ENCODE measurements at regions of chr9 and their contacts with region 1.

Region 1: DNA sequence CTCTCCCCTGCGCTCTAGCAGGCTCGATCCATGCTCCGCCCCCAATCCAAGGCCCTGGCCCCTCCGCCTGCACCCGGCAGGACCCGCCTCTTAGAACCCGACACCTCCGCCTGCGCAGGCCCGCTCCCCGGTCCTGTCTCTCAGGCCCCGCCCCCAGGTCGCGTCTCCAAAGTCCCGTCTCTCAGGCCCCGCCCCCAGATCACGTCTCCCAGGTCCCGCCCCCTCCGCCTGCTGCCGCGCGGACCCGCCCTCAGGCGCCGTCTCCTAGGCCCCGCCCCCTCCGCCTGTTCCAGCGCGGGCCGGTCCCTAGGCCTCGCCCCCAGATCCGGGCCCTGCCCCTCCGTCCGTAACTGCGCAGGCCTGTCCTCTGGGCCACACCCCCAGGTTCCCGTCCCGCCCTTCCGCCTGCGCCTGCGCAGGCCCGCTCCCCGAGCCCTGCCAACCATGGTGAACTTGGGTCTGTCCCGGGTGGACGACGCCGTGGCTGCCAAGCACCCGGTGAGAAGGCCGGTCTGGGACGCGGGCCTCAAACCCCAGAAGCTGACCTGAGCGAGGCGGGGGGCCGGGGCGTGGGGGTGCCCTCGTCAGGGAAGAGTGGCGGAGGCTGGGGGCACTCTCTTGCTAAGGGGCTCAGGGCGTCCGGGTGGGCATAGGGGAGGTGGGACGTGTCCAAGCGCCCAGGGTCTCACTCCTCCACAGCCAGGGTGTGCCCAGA is at the start of gene TMEM141:
- DNase-seq: peak; percentile 100
- H3K4me3 Mint-ChIP-seq: peak within 1 kb of the TSS; percentile 81
- H3K27ac Mint-ChIP-seq: peak within 1 kb of the TSS; percentile 79
- H3K4me1 Mint-ChIP-seq: peaks cover 21% of the 10 kb centered on the region
- H3K27me3 Mint-ChIP-seq: peaks cover 1% of the 10 kb centered on the region
- total RNA-seq, gene TMEM141: 42.3 to 45.2 TPM

Region 2: DNA sequence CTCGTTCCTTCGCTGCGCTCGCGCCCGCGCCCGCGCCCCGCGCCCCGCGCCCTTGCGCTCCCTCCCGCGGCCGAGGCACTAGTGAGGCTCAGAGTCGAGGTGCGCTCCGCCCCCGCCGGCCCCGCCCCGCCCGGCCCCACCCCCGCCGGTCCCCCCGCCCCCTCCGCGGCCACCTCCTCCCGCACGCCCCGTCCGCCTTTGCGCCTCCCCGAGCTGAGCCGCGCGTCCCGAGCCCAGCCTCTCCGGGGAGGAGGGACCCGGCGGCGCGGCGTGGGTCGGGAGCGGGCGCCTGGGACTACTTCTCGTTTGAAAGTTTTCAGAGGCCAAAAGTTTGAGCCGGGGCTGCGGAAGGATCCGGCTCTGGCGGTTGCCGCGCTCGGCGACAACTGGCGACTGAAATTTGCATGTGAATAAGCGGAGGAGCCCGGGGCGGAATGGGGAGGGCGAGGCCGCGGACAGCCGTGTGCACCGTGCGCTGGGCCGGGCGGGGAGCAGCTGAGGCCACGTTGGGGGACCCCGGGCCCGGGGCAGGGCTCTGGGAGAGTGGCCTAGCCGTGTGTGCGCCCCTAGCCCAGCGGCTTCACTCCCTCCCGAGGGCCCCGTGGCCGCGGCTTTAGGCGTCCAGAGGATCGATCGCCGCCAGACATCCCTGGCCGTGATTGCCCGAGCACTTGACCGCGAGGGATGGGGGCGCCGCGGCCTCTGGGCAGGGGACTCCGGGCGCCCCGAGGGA is 245.0 kb before region 1 on chr9 and contains the start of gene NOTCH1:
- CTCF ChIA-PET with region 1: no interaction called
- POLR2A ChIA-PET with region 1: no interaction called
- intact Hi-C with region 1: loop called (anchors 1 kb)
- DNase-seq: peak; percentile 93
- H3K4me3 Mint-ChIP-seq: peak within 1 kb of the TSS; percentile 96
- H3K27ac Mint-ChIP-seq: peak within 1 kb of the TSS; percentile 94
- H3K4me1 Mint-ChIP-seq: peaks cover 45% of the 10 kb centered on the region
- H3K27me3 Mint-ChIP-seq: no peaks in the 10 kb centered on the region
- total RNA-seq, gene NOTCH1: 67.0 to 68.3 TPM

Region 3: GRCh38 chr9:136807281-136808074 is 16.4 kb after region 1 on chr9 and contains the start of gene RABL6:
- CTCF ChIA-PET with region 1: interaction called, 23 read pairs
- POLR2A ChIA-PET with region 1: interaction called, 4 read pairs
- intact Hi-C with region 1: loop called (anchors 1 kb)
- DNase-seq: peak; percentile 86
- H3K4me3 Mint-ChIP-seq: peak within 1 kb of the TSS; percentile 77
- H3K27ac Mint-ChIP-seq: peak within 1 kb of the TSS; percentile 85
- H3K4me1 Mint-ChIP-seq: peaks cover 27% of the 10 kb centered on the region
- H3K27me3 Mint-ChIP-seq: no peaks in the 10 kb centered on the region
- total RNA-seq, gene RABL6: 83.4 to 85.3 TPM

Region 4: GRCh38 chr9:136902259-136902821 is 111.3 kb after region 1 on chr9:
- CTCF ChIA-PET with region 1: interaction called, 4 read pairs
- POLR2A ChIA-PET with region 1: no interaction called
- intact Hi-C with region 1: loop called (anchors 5 kb)
- DNase-seq: peak; percentile 95
- H3K4me3 Mint-ChIP-seq: peak overlapping the region; percentile 70
- H3K27ac Mint-ChIP-seq: peak overlapping the region; percentile 98
- H3K4me1 Mint-ChIP-seq: peaks cover 51% of the 10 kb centered on the region
- H3K27me3 Mint-ChIP-seq: no peaks in the 10 kb centered on the region

Region 5: GRCh38 chr9:136991993-136992818 is 201.1 kb after region 1 on chr9 and contains the start of gene PAXX:
- CTCF ChIA-PET with region 1: interaction called, 4 read pairs
- POLR2A ChIA-PET with region 1: no interaction called
- intact Hi-C with region 1: loop called (anchors 5 kb)
- DNase-seq: peak; percentile 96
- H3K4me3 Mint-ChIP-seq: peak within 1 kb of the TSS; percentile 82
- H3K27ac Mint-ChIP-seq: peak within 1 kb of the TSS; percentile 79
- H3K4me1 Mint-ChIP-seq: peaks cover 18% of the 10 kb centered on the region
- H3K27me3 Mint-ChIP-seq: peaks cover 4% of the 10 kb centered on the region
- total RNA-seq, gene PAXX: 71.0 to 71.2 TPM

Region 6: DNA sequence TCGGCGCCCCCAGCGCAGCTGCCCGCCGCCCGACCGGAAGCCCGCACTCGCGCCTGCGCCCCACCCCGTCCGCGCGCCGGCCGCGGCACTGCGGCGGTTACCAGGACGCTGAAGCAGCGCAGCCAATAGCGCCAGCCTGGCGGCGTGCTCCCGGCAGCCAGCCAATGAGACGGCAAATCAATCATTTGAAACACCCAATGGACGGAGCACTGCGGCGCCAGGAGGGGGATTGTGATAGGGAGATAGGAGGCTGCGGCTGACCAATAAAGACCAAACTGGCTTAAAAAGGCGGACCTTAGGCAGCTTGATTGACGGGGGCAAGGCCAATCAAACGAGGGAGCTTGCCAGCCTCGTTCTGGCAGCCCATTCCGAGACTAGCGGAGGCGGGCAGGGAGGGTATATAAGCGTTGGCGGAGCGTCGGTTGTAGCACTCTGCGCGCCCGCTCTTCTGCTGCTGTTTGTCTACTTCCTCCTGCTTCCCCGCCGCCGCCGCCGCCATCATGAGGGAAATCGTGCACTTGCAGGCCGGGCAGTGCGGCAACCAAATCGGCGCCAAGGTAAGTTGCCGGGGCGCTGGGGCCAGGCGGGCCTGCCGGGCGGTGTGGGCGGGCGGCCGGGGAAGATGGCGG is 449.9 kb after region 1 on chr9 and contains the start of gene TUBB4B:
- CTCF ChIA-PET with region 1: no interaction called
- POLR2A ChIA-PET with region 1: interaction called, 4 read pairs
- intact Hi-C with region 1: loop called (anchors 5 kb)
- DNase-seq: peak; percentile 99
- H3K4me3 Mint-ChIP-seq: peak within 1 kb of the TSS; percentile 88
- H3K27ac Mint-ChIP-seq: peak within 1 kb of the TSS; percentile 94
- H3K4me1 Mint-ChIP-seq: peaks cover 21% of the 10 kb centered on the region
- H3K27me3 Mint-ChIP-seq: no peaks in the 10 kb centered on the region
- total RNA-seq, gene TUBB4B: 320 to 325 TPM